ENCODE measurements at regions of chr12 and their contacts with region 1.

Region 1: GRCh38 chr12:103930034-103930786 is at the start of gene HSP90B1:
- DNase-seq: peak; percentile 100
- ATAC-seq: peak; percentile 87
- H3K4me3 ChIP-seq: peak within 1 kb of the TSS; percentile 66
- H3K27ac ChIP-seq: peak within 1 kb of the TSS; percentile 92
- H3K4me1 ChIP-seq: peaks cover 5% of the 10 kb centered on the region
- H3K27me3 ChIP-seq: no peaks in the 10 kb centered on the region
- CTCF ChIP-seq: no peak
- POLR2A ChIP-seq: peak; percentile 93
- RAD21 ChIP-seq: no peak
- total RNA-seq, gene HSP90B1: 398 and 587 TPM in 2 replicates

Region 2: DNA sequence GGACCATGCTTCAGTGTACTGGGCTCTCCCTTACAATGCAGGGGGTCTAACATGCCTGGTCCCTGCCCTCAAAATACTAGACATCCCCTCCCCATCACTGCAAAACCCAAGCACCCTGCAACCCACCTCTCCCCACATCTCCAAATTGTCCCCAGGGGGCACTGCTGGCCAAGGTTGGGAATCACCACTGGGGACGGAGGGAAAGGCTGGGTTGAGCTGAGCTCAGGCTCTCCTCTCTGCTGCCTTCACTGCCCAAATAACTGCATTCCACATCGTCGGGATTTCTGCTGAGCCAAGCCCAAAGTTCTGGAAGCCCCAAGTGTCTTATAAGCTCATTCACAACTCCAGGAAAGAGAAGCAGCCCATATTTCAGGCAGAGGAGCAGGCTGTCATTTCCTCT is 158.7 kb before region 1 on chr12:
- CTCF ChIA-PET with region 1: no interaction called
- POLR2A ChIA-PET with region 1: no interaction called
- dilution Hi-C with region 1: no loop called
- in situ Hi-C with region 1: loop called (anchors 10 kb)
- intact Hi-C with region 1: loop called (anchors 2 kb)
- DNase-seq: peak; percentile 44
- ATAC-seq: peak; percentile 97
- H3K4me3 ChIP-seq: no peak overlapping the region
- H3K27ac ChIP-seq: no peak overlapping the region
- H3K4me1 ChIP-seq: no peaks in the 10 kb centered on the region; the same call in 1 of the 2 replicates
- H3K27me3 ChIP-seq: no peaks in the 10 kb centered on the region
- CTCF ChIP-seq: peak; percentile 72
- POLR2A ChIP-seq: no peak
- RAD21 ChIP-seq: peak; percentile 86

Region 3: GRCh38 chr12:103852498-103852997 is 77.7 kb before region 1 on chr12:
- CTCF ChIA-PET with region 1: no interaction called
- POLR2A ChIA-PET with region 1: no interaction called
- dilution Hi-C with region 1: no loop called
- in situ Hi-C with region 1: no loop called
- intact Hi-C with region 1: no loop called
- DNase-seq: peak; percentile 54
- ATAC-seq: no peak
- H3K4me3 ChIP-seq: no peak overlapping the region
- H3K27ac ChIP-seq: no peak overlapping the region
- H3K4me1 ChIP-seq: peaks cover 7% of the 10 kb centered on the region
- H3K27me3 ChIP-seq: no peaks in the 10 kb centered on the region
- CTCF ChIP-seq: no peak
- POLR2A ChIP-seq: no peak
- RAD21 ChIP-seq: no peak

Region 4: DNA sequence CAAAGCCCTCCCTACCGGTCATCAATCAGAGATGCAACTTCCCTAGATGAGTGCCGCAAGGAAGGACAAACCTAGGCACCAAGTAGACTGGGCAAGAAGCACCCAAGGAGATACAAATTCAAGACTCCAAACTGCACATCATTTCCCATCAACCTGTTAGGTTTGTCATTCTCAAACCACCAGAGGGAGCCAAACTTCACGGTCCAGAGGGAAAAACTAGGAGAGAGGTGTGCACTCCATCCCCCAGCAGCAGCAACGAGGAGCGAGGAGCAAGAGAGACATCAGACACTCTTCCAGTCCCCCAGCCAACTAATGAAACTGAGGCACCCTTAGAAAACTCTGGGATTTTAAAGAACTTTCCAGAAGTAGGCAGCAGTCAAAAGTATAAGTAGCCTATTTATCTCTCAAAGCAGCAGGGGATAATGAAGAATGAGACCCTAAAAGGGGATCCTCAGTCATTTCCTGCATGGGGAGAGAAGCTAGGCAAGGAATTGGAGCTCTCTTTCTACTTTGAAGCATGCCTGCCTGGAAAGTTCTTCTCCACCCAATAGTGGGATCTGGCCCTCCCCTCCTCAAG is 52.2 kb before region 1 on chr12:
- CTCF ChIA-PET with region 1: interaction called, 13 read pairs
- POLR2A ChIA-PET with region 1: no interaction called
- dilution Hi-C with region 1: no loop called
- in situ Hi-C with region 1: no loop called
- intact Hi-C with region 1: no loop called
- DNase-seq: peak; percentile 68
- ATAC-seq: peak; percentile 96
- H3K4me3 ChIP-seq: no peak overlapping the region
- H3K27ac ChIP-seq: no peak overlapping the region
- H3K4me1 ChIP-seq: no peaks in the 10 kb centered on the region
- H3K27me3 ChIP-seq: peaks cover 1% of the 10 kb centered on the region
- CTCF ChIP-seq: peak; percentile 82
- POLR2A ChIP-seq: no peak
- RAD21 ChIP-seq: peak; percentile 90

Region 5: DNA sequence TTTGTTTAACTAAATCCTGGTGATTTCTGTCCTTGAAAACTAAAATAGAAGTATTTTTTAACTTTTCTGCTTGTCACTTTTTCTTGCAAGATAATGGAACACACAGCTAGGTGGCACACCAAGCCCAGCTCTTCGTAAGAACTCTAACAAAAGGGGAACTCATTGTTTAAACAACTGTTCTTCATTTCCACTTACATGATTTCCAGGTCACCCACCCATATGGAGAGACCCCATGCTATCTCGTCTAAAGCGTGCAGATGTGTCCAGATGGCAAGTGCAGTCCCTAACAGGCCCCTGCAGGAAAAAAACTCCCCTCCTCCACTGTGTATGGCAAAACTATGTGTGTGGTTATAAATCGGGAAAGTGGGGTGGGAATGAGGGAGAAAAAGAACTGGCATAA is 45.9 kb before region 1 on chr12:
- CTCF ChIA-PET with region 1: no interaction called
- POLR2A ChIA-PET with region 1: no interaction called
- dilution Hi-C with region 1: no loop called
- in situ Hi-C with region 1: no loop called
- intact Hi-C with region 1: loop called (anchors 1 kb)
- DNase-seq: peak; percentile 76
- ATAC-seq: peak; percentile 59; the same call in 1 of the 2 replicates
- H3K4me3 ChIP-seq: no peak overlapping the region
- H3K27ac ChIP-seq: no peak overlapping the region
- H3K4me1 ChIP-seq: no peaks in the 10 kb centered on the region
- H3K27me3 ChIP-seq: no peaks in the 10 kb centered on the region
- CTCF ChIP-seq: peak; percentile 72
- POLR2A ChIP-seq: no peak
- RAD21 ChIP-seq: peak; percentile 83

Region 6: DNA sequence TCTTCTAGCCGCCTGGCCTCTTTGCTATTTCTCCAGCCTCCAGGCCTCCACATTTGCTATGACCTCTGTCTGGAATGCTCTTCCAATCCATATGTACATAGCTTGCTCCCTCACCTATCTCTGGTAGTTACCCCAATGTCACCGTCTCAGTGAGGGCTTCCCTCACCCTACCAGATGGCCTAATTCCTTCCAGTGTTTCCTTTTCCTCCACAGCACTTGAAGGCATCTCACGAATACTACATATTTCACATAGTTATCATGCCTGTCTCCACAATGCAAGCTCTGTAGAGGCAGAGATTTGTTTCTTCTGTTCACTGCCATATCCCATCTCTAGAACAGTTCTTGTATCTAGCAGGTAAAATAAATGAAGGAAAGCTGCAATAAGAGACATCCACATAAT is 21.3 kb before region 1 on chr12:
- CTCF ChIA-PET with region 1: interaction called, 5 read pairs
- POLR2A ChIA-PET with region 1: interaction called, 3 read pairs
- dilution Hi-C with region 1: no loop called
- in situ Hi-C with region 1: no loop called
- intact Hi-C with region 1: loop called (anchors 2 kb)
- DNase-seq: peak; percentile 58
- ATAC-seq: peak; percentile 89
- H3K4me3 ChIP-seq: no peak overlapping the region
- H3K27ac ChIP-seq: peak overlapping the region; percentile 63; the same call in 1 of the 2 replicates
- H3K4me1 ChIP-seq: peaks cover 15% of the 10 kb centered on the region
- H3K27me3 ChIP-seq: no peaks in the 10 kb centered on the region
- CTCF ChIP-seq: no peak
- POLR2A ChIP-seq: no peak
- RAD21 ChIP-seq: no peak

Region 7: DNA sequence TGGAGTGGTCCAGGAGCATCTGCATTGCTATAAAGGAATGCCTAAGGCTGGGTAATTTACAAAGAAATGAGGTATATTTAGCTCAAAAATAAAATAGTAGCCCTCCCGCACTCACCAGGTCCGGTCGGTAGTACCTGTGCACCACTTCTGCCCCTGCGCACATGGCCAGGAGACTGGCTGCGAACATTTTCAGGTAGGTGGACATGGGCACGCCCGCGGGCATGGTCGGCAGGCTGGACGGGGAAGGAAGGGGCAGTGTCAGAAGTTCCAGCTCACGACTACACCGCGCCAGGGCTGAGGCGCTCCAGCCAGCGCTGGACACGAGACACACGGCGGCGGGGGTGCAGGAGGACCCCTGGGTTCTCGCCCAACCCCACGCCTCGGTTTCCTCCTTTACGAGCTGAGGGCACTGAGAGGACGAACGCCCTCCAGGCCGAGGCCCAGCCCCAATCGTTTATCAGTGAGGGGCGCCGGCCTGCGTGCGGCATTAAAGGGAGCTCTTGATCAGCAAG is 26.4 kb after region 1 on chr12:
- CTCF ChIA-PET with region 1: no interaction called
- POLR2A ChIA-PET with region 1: no interaction called
- dilution Hi-C with region 1: no loop called
- in situ Hi-C with region 1: no loop called
- intact Hi-C with region 1: no loop called
- DNase-seq: no peak
- ATAC-seq: peak; percentile 52
- H3K4me3 ChIP-seq: peak overlapping the region; percentile 72
- H3K27ac ChIP-seq: peak overlapping the region; percentile 90
- H3K4me1 ChIP-seq: peaks cover 3% of the 10 kb centered on the region; the same call in 1 of the 2 replicates
- H3K27me3 ChIP-seq: no peaks in the 10 kb centered on the region
- CTCF ChIP-seq: no peak
- POLR2A ChIP-seq: no peak
- RAD21 ChIP-seq: no peak

Measured in IMR-90 (cell line).